Aorta (tissue), 5 donors: ENCODE measurements at regions of chr17 and their contacts with region 1.

Region 1: DNA sequence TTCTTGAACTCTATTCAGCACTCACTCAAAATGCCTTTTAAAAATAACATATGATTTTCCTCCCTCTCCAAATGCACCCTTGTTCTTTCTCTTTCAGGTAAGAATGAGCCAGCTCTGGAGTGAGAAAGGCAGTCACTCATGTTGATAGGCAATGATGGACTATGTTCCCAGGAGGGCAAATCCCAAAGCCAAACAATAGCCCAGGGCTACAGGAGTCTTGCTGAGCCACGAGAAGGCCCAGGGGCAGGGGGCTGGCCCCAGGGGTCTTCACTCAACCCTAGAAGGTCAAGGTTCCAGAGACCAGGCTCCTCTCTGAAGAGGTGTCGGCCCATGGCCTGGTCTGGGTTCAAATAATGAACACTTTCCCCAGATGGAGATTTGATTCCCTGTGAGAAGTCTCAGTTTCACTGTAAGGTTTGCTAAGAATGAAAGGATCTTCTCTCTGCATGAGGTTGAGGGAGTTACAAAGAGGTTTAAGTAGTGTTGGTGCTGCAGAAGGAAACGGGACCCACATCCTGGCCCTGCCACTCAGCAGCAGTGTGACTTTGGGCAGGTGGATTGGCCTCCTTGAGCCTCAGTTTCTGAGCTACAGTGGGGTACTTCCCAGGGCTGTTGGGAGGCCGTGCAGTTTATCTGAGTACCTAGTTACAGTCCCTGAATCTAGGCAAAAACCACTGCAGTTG is 49.0 kb downstream of the RTN4RL1 start:
- DNase-seq: no peak
- ATAC-seq: no peak
- H3K4me3 ChIP-seq: no peak overlapping the region
- H3K27ac ChIP-seq: no peak overlapping the region
- H3K4me1 ChIP-seq: no peaks in the 10 kb centered on the region
- H3K27me3 ChIP-seq: no peaks in the 10 kb centered on the region

Region 2: GRCh38 chr17:1959871-1960544 is 16.1 kb before region 1 on chr17:
- intact Hi-C with region 1: loop called in 1 of 2 experiments (anchors 1 kb)
- DNase-seq: no peak
- ATAC-seq: no peak
- H3K4me3 ChIP-seq: no peak overlapping the region
- H3K27ac ChIP-seq: no peak overlapping the region
- H3K4me1 ChIP-seq: no peaks in the 10 kb centered on the region
- H3K27me3 ChIP-seq: no peaks in the 10 kb centered on the region